ENCODE measurements at regions of chr9 and their contacts with region 1.

Region 1: GRCh38 chr9:89701221-89701798 is 96.5 kb downstream of the GADD45G start:
- DNase-seq: peak; percentile 73
- ATAC-seq: peak; percentile 95
- H3K4me3 ChIP-seq: peak overlapping the region; percentile 41
- H3K27ac ChIP-seq: peak overlapping the region; percentile 83
- H3K4me1 ChIP-seq: peaks cover 20% of the 10 kb centered on the region
- H3K27me3 ChIP-seq: no peaks in the 10 kb centered on the region
- CTCF ChIP-seq: no peak
- EP300 ChIP-seq: peak; percentile 27 to 91; a peak in 2 of 4 replicates
- POLR2A ChIP-seq: peak; percentile 86
- RAD21 ChIP-seq: no peak

Region 2: DNA sequence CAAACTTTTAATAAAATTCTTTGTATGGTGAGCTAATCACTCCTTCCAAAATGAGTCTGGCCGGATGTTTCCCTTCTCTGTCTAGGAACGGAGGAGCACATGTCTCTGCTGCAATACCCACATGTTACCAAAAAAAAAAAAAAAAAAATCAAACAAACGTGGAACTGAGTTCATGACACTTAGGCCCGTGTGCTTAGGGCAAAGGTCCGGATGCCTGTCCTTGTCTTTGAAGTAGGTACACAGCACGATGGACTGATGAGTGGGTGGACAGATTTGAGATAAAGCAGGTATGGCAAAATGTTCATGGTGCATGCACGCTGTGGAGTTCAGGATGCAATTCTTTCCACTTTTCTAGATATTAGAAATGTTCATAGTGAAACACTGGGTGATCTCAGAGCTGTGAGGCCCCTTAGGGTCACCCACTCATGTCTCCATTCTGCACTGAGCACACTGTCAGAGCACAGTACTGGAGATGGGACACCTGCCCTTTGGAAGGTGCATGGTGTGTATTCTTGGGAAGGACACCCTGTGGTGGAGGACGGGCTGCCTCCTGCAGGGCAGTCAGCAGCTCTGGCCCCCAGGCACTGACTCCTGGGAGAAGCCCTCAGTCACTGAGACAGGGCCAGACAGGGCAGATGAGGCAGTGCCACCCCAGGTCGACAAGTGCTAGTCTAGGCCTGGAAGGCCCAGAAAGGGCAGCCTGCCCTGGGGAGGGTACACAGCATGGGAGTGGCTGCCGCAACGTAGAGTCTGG is 52.9 kb before region 1 on chr9:
- CTCF ChIA-PET with region 1: no interaction called
- POLR2A ChIA-PET with region 1: no interaction called
- RAD21 ChIA-PET with region 1: no interaction called
- SMC1A ChIA-PET with region 1: no interaction called
- in situ Hi-C with region 1: no loop called
- intact Hi-C with region 1: no loop called
- DNase-seq: no peak
- ATAC-seq: no peak
- H3K4me3 ChIP-seq: no peak overlapping the region
- H3K27ac ChIP-seq: no peak overlapping the region
- H3K4me1 ChIP-seq: no peaks in the 10 kb centered on the region
- H3K27me3 ChIP-seq: peaks cover 0 to 3% of the 10 kb centered on the region in 2 experiments
- CTCF ChIP-seq: no peak
- EP300 ChIP-seq: no peak
- POLR2A ChIP-seq: no peak
- RAD21 ChIP-seq: no peak

Region 3: GRCh38 chr9:89690334-89690912 is 10.9 kb before region 1 on chr9:
- CTCF ChIA-PET with region 1: interaction called, 4 read pairs
- POLR2A ChIA-PET with region 1: interaction called, 5 read pairs
- RAD21 ChIA-PET with region 1: interaction called, 51 read pairs
- SMC1A ChIA-PET with region 1: interaction called, 39 read pairs
- in situ Hi-C with region 1: no loop called
- intact Hi-C with region 1: no loop called
- DNase-seq: peak; percentile 64
- ATAC-seq: peak; percentile 96
- H3K4me3 ChIP-seq: no peak overlapping the region
- H3K27ac ChIP-seq: no peak overlapping the region
- H3K4me1 ChIP-seq: peaks cover 17% of the 10 kb centered on the region
- H3K27me3 ChIP-seq: peaks cover 0 to 4% of the 10 kb centered on the region in 2 experiments; a peak in 2 of 4 replicates
- CTCF ChIP-seq: no peak
- EP300 ChIP-seq: peak; percentile 81 to 92; a peak in 3 of 4 replicates
- POLR2A ChIP-seq: no peak
- RAD21 ChIP-seq: no peak

Region 4: DNA sequence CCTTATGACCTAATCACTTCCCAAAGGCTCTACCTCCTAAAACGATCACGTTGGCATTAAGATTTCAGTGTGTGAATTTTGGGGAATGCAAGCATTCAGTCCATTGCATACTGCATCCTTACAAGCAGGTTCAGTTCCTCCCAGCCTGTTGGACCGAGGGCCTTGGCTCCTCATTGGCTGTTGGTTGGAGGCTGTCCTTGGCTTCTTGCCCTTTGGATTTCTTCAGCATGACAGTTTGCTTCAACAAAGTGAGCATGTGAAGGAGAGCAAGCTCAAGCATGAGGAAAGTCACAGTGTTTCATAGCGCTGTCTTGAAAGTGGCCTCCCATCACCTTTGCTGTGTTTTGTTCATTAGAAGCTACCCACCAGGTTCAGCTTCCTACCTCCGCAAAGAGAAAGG is 13.0 kb after region 1 on chr9:
- CTCF ChIA-PET with region 1: interaction called, 7 read pairs
- POLR2A ChIA-PET with region 1: interaction called, 7 read pairs
- RAD21 ChIA-PET with region 1: interaction called, 19 read pairs
- SMC1A ChIA-PET with region 1: interaction called, 14 read pairs
- in situ Hi-C with region 1: no loop called
- intact Hi-C with region 1: no loop called
- DNase-seq: no peak
- ATAC-seq: no peak
- H3K4me3 ChIP-seq: no peak overlapping the region
- H3K27ac ChIP-seq: no peak overlapping the region
- H3K4me1 ChIP-seq: peaks cover 11% of the 10 kb centered on the region; the same call in 1 of the 2 replicates
- H3K27me3 ChIP-seq: no peaks in the 10 kb centered on the region
- CTCF ChIP-seq: no peak
- EP300 ChIP-seq: no peak
- POLR2A ChIP-seq: no peak
- RAD21 ChIP-seq: no peak

Region 5: DNA sequence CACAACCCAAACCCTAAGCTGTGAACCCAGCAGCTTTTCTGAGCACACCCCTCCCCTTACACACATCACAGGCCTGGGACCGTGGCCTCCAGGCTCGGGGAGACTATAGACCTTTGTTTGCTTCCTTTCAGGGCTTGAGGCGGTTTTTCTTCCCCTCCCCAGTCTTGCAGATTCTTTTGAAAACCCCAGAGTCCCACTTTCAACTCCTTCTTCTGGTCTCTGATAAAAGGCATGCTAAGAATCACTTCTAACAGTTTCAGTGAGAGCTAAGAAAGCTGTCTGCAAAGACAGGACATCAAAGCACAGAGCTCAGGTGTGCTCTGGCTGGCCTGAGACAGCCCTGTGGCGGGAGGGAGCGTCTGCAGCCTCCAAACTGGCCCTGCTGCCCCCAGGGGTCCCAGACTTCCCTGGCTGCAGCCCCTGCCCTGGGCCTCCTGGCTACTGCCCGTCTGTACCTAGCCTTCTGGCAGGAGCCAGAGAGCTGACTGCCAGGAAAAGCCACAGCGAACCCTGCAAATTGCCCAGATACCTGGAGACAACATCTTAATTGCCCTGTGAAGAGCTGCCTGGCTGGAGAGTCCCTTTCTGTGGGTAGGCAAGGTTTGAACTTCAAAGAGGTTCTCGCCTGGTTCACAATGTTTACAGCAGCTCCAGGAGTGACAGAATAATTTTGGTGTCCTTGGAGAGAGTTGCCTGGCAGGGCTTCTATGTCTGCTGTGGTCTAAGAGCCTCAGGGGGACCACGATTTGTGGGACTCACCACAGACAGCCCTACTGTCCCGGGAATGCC is 42.5 kb after region 1 on chr9:
- CTCF ChIA-PET with region 1: interaction called, 4 read pairs
- POLR2A ChIA-PET with region 1: interaction called, 9 read pairs
- RAD21 ChIA-PET with region 1: interaction called, 57 read pairs
- SMC1A ChIA-PET with region 1: interaction called, 33 read pairs
- in situ Hi-C with region 1: no loop called
- intact Hi-C with region 1: no loop called
- DNase-seq: peak; percentile 71
- ATAC-seq: peak; percentile 73
- H3K4me3 ChIP-seq: no peak overlapping the region
- H3K27ac ChIP-seq: peak overlapping the region; percentile 58
- H3K4me1 ChIP-seq: peaks cover 48% of the 10 kb centered on the region
- H3K27me3 ChIP-seq: no peaks in the 10 kb centered on the region; a peak in 1 of 4 replicates
- CTCF ChIP-seq: 0 out of 6 replicates have a peak, but pooled peaks of 2 of the 3 experiments have one; percentile 11 to 12
- EP300 ChIP-seq: 0 out of 4 replicates have a peak, but pooled peaks of 1 of the 2 experiments have one; percentile 10
- POLR2A ChIP-seq: no peak
- RAD21 ChIP-seq: 0 out of 2 replicates have a peak, but pooled peaks have one; percentile 2

Region 6: GRCh38 chr9:89753472-89754055 is 52.3 kb after region 1 on chr9:
- CTCF ChIA-PET with region 1: interaction called, 3 read pairs
- POLR2A ChIA-PET with region 1: no interaction called
- RAD21 ChIA-PET with region 1: interaction called, 13 read pairs
- SMC1A ChIA-PET with region 1: interaction called, 8 read pairs
- in situ Hi-C with region 1: no loop called
- intact Hi-C with region 1: no loop called
- DNase-seq: no peak
- ATAC-seq: peak; percentile 78
- H3K4me3 ChIP-seq: no peak overlapping the region
- H3K27ac ChIP-seq: no peak overlapping the region
- H3K4me1 ChIP-seq: peaks cover 3% of the 10 kb centered on the region; the same call in 1 of the 2 replicates
- H3K27me3 ChIP-seq: peaks cover 0 to 1% of the 10 kb centered on the region in 2 experiments; a peak in 1 of 4 replicates
- CTCF ChIP-seq: no peak
- EP300 ChIP-seq: no peak
- POLR2A ChIP-seq: no peak
- RAD21 ChIP-seq: no peak

Region 7: GRCh38 chr9:89902450-89903145 is 201.3 kb after region 1 on chr9:
- CTCF ChIA-PET with region 1: no interaction called
- POLR2A ChIA-PET with region 1: no interaction called
- RAD21 ChIA-PET with region 1: no interaction called
- SMC1A ChIA-PET with region 1: no interaction called
- in situ Hi-C with region 1: no loop called
- intact Hi-C with region 1: no loop called
- DNase-seq: no peak
- ATAC-seq: no peak
- H3K4me3 ChIP-seq: no peak overlapping the region
- H3K27ac ChIP-seq: no peak overlapping the region
- H3K4me1 ChIP-seq: no peaks in the 10 kb centered on the region
- H3K27me3 ChIP-seq: peaks cover 2 to 4% of the 10 kb centered on the region in 2 experiments; a peak in 2 of 4 replicates
- CTCF ChIP-seq: no peak
- EP300 ChIP-seq: no peak
- POLR2A ChIP-seq: no peak
- RAD21 ChIP-seq: no peak

Region 8: DNA sequence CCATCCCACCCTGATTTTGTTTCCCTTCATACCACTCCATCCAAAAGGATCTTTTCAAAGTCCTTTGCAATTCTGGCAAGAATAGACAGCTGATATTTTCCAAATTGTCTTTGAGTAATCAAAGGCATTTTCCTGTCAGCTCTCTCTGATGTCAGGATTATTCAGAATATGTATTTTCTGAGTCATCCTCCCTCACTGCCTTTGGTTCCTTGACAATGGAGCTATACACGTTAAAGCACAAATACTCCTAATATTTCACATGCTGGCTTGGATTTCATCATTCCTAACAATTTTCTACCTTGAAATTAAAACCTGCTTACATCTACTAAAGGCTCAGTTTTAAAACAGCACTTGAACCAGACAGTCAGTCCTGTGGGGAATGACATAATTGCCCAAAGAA is 282.9 kb after region 1 on chr9:
- CTCF ChIA-PET with region 1: no interaction called
- POLR2A ChIA-PET with region 1: no interaction called
- RAD21 ChIA-PET with region 1: no interaction called
- SMC1A ChIA-PET with region 1: no interaction called
- in situ Hi-C with region 1: no loop called
- intact Hi-C with region 1: no loop called
- DNase-seq: no peak
- ATAC-seq: no peak
- H3K4me3 ChIP-seq: no peak overlapping the region
- H3K27ac ChIP-seq: no peak overlapping the region
- H3K4me1 ChIP-seq: peaks cover 6% of the 10 kb centered on the region; the same call in 1 of the 2 replicates
- H3K27me3 ChIP-seq: no peaks in the 10 kb centered on the region; a peak in 1 of 4 replicates
- CTCF ChIP-seq: no peak
- EP300 ChIP-seq: no peak
- POLR2A ChIP-seq: no peak
- RAD21 ChIP-seq: no peak

Region 9: GRCh38 chr9:90025816-90026215 is 324.5 kb after region 1 on chr9:
- CTCF ChIA-PET with region 1: no interaction called
- POLR2A ChIA-PET with region 1: no interaction called
- RAD21 ChIA-PET with region 1: no interaction called
- SMC1A ChIA-PET with region 1: no interaction called
- in situ Hi-C with region 1: no loop called
- intact Hi-C with region 1: no loop called
- DNase-seq: no peak
- ATAC-seq: no peak
- H3K4me3 ChIP-seq: no peak overlapping the region
- H3K27ac ChIP-seq: no peak overlapping the region
- H3K4me1 ChIP-seq: peaks cover 12% of the 10 kb centered on the region
- H3K27me3 ChIP-seq: peaks cover 0 to 2% of the 10 kb centered on the region in 2 experiments; a peak in 1 of 4 replicates
- CTCF ChIP-seq: no peak
- EP300 ChIP-seq: no peak
- POLR2A ChIP-seq: no peak
- RAD21 ChIP-seq: no peak

Measured in GM12878 (cell line).